Heart left ventricle (tissue), 16 donors: ENCODE measurements at regions of chr4 and their contacts with region 1.

Region 1: GRCh38 chr4:114378306-114378903 is 220.2 kb upstream of the UGT8 start:
- DNase-seq: no peak
- ATAC-seq: peak in 2 of 4 donors; percentile 31 to 48
- H3K4me3 ChIP-seq: no peak overlapping the region
- H3K27ac ChIP-seq: no peak overlapping the region
- H3K4me1 ChIP-seq: no peaks in the 10 kb centered on the region
- H3K27me3 ChIP-seq: no peaks in the 10 kb centered on the region
- CTCF ChIP-seq: peak in 10 of 12 donors; percentile 12 to 68 (median 52)
- POLR2A ChIP-seq: no peak

Region 2: GRCh38 chr4:113636438-113636818 is 742.0 kb before region 1 on chr4:
- intact Hi-C with region 1: no loop called
- DNase-seq: no peak
- ATAC-seq: peak in 2 of 4 donors; percentile 6
- H3K4me3 ChIP-seq: no peak overlapping the region
- H3K27ac ChIP-seq: peak overlapping the region; percentile 62 to 95 (median 77)
- H3K4me1 ChIP-seq: peaks cover 0 to 90% (median 70%) of the 10 kb centered on the region in 12 donors
- H3K27me3 ChIP-seq: no peaks in the 10 kb centered on the region
- CTCF ChIP-seq: peak in 3 of 12 donors; percentile 6 to 35 (median 19)
- POLR2A ChIP-seq: no peak

Region 3: DNA sequence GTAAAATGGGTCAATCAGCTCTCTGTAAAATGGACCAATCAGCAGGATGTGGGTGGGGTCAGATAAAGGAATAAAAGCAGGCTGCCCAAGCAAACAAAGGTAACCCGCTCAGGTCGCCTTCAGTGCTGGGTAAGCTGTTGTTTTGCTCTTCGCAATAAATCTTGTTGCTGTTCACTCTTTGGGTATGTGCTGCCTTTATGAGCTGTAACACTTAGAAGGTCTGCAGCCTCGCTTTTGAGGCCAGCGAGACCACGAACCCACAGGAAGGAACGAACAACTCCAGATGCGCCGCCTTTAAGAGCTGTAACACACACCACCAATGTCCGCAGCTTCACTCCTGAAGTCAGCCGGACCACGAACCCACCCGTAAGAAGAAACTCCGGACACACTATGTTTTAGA is 605.4 kb before region 1 on chr4:
- intact Hi-C with region 1: loop called in 3 of 10 experiments (anchors 5 to 10 kb)
- DNase-seq: no peak
- ATAC-seq: no peak
- H3K4me3 ChIP-seq: no peak overlapping the region
- H3K27ac ChIP-seq: no peak overlapping the region
- H3K4me1 ChIP-seq: no peaks in the 10 kb centered on the region
- H3K27me3 ChIP-seq: no peaks in the 10 kb centered on the region
- CTCF ChIP-seq: no peak
- POLR2A ChIP-seq: no peak

Region 4: DNA sequence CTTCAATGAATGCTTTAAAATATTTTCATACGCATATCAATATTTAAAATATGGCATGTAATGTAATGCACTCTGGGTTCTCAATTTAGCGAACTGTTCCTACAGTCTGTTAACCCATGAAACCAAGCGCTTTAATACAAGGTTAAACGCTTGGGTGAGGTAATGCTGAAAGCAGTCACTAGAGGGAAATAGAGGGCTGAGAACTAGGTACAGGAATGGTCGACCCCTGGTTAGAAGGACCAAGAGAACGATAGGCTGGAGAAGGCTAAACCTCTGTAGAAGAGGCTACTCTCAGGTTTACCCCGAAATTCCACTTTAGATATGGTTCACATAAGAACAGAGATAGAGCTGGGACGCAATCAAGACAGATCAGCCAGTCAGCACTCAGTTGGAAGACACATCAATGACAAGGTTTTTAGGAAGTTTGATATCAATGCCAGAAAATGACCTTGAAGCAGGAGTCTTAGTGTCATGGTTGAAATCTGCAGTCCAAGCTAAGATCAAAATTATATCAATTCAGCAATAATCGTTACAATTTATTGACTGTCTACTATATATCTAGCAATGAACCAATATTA is 425.9 kb before region 1 on chr4:
- intact Hi-C with region 1: loop called in 7 of 10 experiments (anchors 5 to 10 kb)
- DNase-seq: no peak
- ATAC-seq: peak in 3 of 4 donors; percentile 61 to 80 (median 70)
- H3K4me3 ChIP-seq: no peak overlapping the region
- H3K27ac ChIP-seq: no peak overlapping the region
- H3K4me1 ChIP-seq: peaks cover 0 to 18% (median 7%) of the 10 kb centered on the region in 12 donors
- H3K27me3 ChIP-seq: no peaks in the 10 kb centered on the region
- CTCF ChIP-seq: peak; percentile 45 to 68 (median 54)
- POLR2A ChIP-seq: no peak

Region 5: DNA sequence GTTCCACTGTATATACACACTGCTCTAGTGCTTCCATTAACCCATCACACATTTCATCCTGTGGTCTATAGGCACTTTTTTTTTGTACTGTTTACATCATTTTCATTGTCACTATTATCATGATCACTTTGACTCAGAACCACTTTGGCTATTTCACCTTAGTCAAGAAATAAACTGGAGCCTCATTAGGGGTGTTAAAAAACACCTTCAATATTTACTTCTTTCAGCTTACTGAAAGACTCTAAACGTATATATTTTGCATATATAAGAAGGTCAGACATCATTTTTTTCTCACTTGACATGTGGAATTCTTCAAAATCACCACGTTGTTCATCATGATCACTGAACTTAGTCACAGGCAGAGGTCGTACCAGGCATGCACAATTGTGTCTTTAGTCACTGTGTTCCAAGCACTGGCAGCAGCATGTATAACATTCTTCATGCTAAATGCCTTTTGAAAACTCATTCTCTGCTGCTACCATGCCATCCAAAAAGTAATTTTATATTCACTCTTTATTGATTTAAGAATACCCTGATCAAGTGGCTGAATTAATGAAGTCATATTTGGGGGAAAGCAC is 169.7 kb before region 1 on chr4:
- intact Hi-C with region 1: loop called in 2 of 10 experiments (anchors 2 to 10 kb)
- DNase-seq: no peak
- ATAC-seq: peak in 1 of 4 donors; percentile 48
- H3K4me3 ChIP-seq: no peak overlapping the region
- H3K27ac ChIP-seq: no peak overlapping the region
- H3K4me1 ChIP-seq: no peaks in the 10 kb centered on the region
- H3K27me3 ChIP-seq: no peaks in the 10 kb centered on the region
- CTCF ChIP-seq: peak in 4 of 12 donors; percentile 9 to 16 (median 11)
- POLR2A ChIP-seq: no peak